ENCODE measurements at regions of chr10 and their contacts with region 1.

Region 1: GRCh38 chr10:69639291-69640195 is 9.5 kb downstream of the FAM241B start:
- DNase-seq: no peak
- ATAC-seq: peak; percentile 50
- H3K4me3 Mint-ChIP-seq: no peak overlapping the region
- H3K27ac Mint-ChIP-seq: no peak overlapping the region
- H3K4me1 Mint-ChIP-seq: no peaks in the 10 kb centered on the region
- H3K27me3 Mint-ChIP-seq: peaks cover 9% of the 10 kb centered on the region
- CTCF ChIP-seq: no peak

Region 2: GRCh38 chr10:69237528-69238159 is 401.9 kb before region 1 on chr10:
- CTCF ChIA-PET with region 1: interaction called, 3 read pairs
- POLR2A ChIA-PET with region 1: no interaction called
- intact Hi-C with region 1: loop called (anchors 2 kb)
- DNase-seq: peak; percentile 79
- ATAC-seq: peak; percentile 98
- H3K4me3 Mint-ChIP-seq: no peak overlapping the region
- H3K27ac Mint-ChIP-seq: no peak overlapping the region
- H3K4me1 Mint-ChIP-seq: peaks cover 3% of the 10 kb centered on the region
- H3K27me3 Mint-ChIP-seq: no peaks in the 10 kb centered on the region
- CTCF ChIP-seq: peak; percentile 67

Region 3: GRCh38 chr10:69425511-69426298 is 213.8 kb before region 1 on chr10:
- CTCF ChIA-PET with region 1: interaction called, 3 read pairs
- POLR2A ChIA-PET with region 1: no interaction called
- intact Hi-C with region 1: loop called (anchors 5 kb)
- DNase-seq: no peak
- ATAC-seq: no peak
- H3K4me3 Mint-ChIP-seq: no peak overlapping the region
- H3K27ac Mint-ChIP-seq: no peak overlapping the region
- H3K4me1 Mint-ChIP-seq: peaks cover 5% of the 10 kb centered on the region
- H3K27me3 Mint-ChIP-seq: peaks cover 5% of the 10 kb centered on the region
- CTCF ChIP-seq: no peak

Region 4: DNA sequence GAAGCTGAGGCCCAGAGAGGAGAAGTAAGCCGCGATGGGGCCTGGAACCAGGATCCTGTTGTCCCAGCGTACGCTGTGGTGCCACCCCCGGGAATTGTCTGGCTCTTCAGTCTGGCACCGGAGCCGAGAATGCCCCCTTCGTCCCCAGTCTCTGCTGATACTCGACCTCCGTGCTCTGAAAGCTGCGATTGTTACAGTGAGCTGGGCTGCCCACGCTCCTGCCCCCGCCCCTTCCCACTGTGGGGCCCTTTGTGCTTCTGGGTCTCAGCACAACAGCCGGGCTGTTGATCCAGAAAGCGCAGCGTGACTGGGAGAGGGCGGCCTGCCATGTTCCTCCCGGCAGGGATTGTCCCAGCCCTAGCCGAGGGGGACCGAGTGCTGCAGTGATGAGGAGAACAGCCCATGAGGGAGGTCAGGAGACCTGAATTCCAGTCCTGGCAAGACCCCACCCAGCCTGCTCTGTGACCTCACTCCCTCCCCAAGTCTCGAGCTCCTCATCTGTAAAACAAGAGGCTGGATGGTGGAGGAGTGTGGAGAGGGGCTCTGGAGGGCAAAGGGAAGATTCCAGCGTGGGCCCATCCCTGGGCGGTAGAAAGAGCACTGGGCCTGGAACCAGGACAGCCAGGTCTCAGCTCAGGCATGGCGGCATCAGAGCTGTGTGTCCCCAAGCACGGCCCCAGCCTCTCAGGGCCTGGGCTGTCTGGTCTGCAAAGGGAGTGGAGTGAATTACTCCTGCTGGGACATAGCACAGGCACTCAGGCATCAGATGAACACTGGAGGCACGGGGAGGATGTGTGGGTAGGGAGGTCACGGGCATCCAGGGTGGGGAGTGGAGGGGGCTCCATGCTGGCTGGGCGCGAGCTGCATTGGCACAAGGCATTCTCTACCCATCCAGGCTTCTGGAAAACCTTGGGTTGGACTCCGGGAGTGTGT is 144.7 kb before region 1 on chr10:
- CTCF ChIA-PET with region 1: no interaction called
- POLR2A ChIA-PET with region 1: no interaction called
- intact Hi-C with region 1: no loop called
- DNase-seq: no peak
- ATAC-seq: no peak
- H3K4me3 Mint-ChIP-seq: no peak overlapping the region
- H3K27ac Mint-ChIP-seq: no peak overlapping the region
- H3K4me1 Mint-ChIP-seq: no peaks in the 10 kb centered on the region
- H3K27me3 Mint-ChIP-seq: no peaks in the 10 kb centered on the region
- CTCF ChIP-seq: no peak

Region 5: GRCh38 chr10:69668721-69669120 is 29.2 kb after region 1 on chr10:
- CTCF ChIA-PET with region 1: no interaction called
- POLR2A ChIA-PET with region 1: no interaction called
- intact Hi-C with region 1: no loop called
- DNase-seq: no peak
- ATAC-seq: no peak
- H3K4me3 Mint-ChIP-seq: no peak overlapping the region
- H3K27ac Mint-ChIP-seq: no peak overlapping the region
- H3K4me1 Mint-ChIP-seq: no peaks in the 10 kb centered on the region
- H3K27me3 Mint-ChIP-seq: peaks cover 24% of the 10 kb centered on the region
- CTCF ChIP-seq: no peak

Region 6: DNA sequence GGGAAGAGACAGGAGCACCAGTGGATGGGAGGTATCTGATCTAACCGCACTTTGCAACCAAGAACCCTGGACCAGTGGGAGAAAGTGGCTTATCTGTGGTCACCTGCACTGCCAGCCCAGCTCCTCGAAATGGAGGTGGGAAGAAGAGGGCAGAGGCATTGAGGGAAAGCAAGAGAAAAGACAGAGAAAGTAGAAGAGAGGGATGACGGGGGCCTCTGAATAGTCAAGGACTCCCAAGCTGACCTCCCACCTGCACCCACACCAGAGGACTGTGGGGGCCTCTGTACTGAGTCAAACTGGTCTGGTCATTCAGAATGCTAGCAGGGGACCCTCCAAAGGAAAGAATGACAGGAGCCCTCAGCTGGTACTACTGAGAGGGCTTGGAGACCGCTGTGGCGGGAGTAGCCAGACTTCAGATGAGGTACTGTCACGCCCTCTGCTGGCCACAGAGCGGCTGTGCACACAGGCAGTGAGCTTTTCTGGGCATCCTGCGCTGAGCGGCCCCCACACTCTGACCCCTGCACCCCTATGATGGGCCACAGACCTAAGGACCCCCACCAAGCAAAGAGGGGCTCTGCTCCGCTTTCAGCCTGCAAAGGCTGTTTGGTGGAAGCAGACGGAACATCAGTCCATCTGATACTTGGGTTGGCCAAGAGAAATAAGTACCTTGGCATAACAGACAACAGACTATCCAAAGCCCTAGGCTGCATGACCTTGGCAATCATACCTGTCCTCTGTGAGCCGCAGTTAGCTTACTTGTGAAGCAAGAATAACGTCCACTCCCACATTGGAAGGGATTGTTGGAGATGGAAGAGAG is 275.1 kb after region 1 on chr10:
- CTCF ChIA-PET with region 1: no interaction called
- POLR2A ChIA-PET with region 1: no interaction called
- intact Hi-C with region 1: loop called (anchors 10 kb)
- DNase-seq: peak; percentile 22
- ATAC-seq: peak; percentile 31
- H3K4me3 Mint-ChIP-seq: no peak overlapping the region
- H3K27ac Mint-ChIP-seq: no peak overlapping the region
- H3K4me1 Mint-ChIP-seq: no peaks in the 10 kb centered on the region
- H3K27me3 Mint-ChIP-seq: peaks cover 13% of the 10 kb centered on the region
- CTCF ChIP-seq: no peak

Measured in activated B cell treated with CpG ODN at 0.5 μM for 24 hours (primary cell).